ENCODE measurements at regions of chr1 and their contacts with region 1.

Region 1: DNA sequence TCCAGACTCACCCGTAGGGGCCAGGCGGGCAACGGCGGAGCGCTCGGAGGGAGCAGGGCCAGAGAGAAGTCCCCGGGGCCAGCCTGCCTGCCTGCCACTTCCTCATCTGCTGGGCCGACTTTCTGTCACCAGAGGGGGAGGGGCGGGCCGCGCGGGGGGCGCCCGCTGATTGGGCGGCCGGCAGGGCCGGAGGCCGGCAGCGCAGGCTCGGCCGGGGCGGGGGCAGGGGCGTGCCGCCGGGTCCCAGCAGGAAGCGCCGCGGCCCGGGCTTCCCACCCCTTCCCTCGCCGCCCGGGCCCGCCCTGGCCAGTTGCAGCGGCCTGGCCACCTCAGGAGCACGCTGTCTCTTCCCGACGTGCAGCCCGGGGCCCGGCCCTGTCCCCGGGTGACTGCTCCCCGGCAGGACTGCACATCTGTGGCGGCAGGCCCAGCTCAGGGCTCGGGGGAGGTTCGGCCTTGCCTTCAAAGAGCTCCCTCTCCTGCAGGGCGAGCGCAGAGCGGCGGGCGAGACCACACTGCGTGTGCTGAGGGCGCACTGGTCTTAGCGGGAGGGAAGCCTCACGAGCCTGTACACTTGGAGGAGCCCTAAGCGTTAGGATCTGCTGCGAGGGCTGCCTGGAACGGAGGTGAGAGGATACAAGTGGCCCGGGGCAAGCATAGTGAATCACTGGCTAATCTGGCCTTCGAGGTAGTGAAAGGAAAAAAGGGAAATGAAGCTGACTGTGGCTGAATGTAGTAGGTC is at the start of gene ELOVL1:
- DNase-seq: peak; percentile 92
- ATAC-seq: peak; percentile 87
- H3K4me3 Mint-ChIP-seq: peak within 1 kb of the TSS; percentile 93
- H3K27ac Mint-ChIP-seq: peak within 1 kb of the TSS; percentile 97
- H3K4me1 Mint-ChIP-seq: peaks cover 42% of the 10 kb centered on the region
- H3K27me3 Mint-ChIP-seq: no peaks in the 10 kb centered on the region
- CTCF ChIP-seq: no peak
- total RNA-seq, gene ELOVL1: 80.2 and 84.2 TPM in 2 replicates

Region 2: DNA sequence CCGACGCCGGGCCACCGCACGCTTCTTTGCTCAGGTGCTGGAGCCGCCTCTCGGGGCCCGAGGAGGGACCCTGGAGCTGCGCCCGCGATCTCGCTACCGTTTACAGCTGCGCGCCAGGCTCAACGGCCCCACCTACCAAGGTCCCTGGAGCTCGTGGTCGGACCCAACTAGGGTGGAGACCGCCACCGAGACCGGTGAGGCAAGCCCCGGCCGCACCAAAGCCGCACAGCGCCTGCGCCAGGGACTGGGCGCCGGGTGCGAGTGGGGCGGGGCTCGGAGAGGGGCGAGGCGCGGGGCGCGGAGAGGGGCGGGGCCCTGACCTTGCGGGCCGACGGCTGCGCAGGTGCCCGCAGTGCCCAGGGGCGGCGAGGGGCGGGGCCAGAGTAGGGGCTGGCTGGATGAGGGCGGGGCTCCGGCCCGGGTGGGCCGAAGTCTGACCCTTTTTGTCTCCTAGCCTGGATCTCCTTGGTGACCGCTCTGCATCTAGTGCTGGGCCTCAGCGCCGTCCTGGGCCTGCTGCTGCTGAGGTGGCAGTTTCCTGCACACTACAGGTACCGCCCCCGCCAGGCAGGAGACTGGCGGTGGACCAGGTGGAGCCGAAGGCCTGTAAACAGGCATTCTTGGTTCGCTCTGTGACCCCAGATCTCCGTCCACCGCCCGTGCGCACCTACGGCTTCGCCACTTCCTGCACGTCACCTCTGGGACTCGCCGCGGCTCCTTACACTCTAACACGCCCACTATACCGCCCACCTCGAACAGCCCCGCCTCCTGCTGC is 19.1 kb before region 1 on chr1:
- CTCF ChIA-PET with region 1: no interaction called
- POLR2A ChIA-PET with region 1: interaction called, 19 read pairs
- intact Hi-C with region 1: loop called (anchors 1 kb)
- DNase-seq: peak; percentile 65
- ATAC-seq: peak; percentile 86
- H3K4me3 Mint-ChIP-seq: peak overlapping the region; percentile 85
- H3K27ac Mint-ChIP-seq: peak overlapping the region; percentile 88
- H3K4me1 Mint-ChIP-seq: peaks cover 11% of the 10 kb centered on the region
- H3K27me3 Mint-ChIP-seq: no peaks in the 10 kb centered on the region
- CTCF ChIP-seq: no peak

Region 3: DNA sequence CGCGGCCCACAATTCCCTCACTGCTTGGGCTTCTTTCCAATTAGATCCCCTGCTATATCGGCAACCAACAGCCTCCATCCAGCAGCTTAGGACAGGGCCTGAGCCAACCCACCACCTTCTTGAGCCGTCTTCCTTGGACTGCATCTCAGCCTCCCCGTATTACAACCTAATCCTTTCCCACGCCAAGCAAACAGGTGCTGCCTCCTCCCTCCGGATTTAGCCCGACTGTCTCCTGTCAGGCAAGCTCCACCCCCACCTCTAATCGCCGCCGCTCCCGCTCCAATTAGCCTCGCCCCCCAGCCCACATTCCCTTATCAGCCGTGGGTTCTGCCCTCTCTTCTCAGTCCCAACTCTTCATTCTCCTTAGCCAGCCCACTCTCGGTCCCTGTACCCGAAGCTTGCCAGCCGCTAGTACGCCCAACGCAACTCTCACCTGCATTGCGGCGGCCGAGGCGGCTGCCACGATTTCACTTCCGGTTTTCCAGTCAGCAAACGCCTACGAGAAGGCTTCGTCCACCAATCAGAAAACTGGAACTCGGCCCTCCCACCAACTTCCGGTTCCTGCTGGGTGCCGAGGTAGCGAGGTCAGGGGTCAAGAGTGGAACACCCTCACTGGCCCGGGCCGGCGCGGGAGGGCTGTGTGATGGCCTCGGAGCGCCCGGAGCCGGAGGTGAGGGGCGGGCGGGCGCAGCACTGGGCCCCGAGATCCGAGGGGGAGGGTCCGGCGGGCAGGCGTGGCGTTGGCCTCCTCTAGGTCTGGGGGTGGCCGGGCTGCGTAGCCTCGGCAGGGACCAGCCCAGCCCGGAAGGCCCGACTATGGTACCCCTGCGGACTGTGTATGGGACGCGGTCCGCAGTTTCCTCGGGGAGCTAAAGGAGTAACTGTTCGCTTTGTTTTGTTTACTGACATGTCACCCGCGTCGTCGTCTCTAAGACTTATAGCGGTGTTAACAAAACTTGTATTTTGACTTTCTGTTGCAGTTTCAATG is 21.5 kb after region 1 on chr1 and contains the starts of genes MED8 and SZT2:
- CTCF ChIA-PET with region 1: interaction called, 3 read pairs
- POLR2A ChIA-PET with region 1: interaction called, 76 read pairs
- intact Hi-C with region 1: loop called (anchors 1 kb)
- DNase-seq: peak; percentile 90
- ATAC-seq: peak; percentile 91
- H3K4me3 Mint-ChIP-seq: peak within 1 kb of the TSS; percentile 99
- H3K27ac Mint-ChIP-seq: peak within 1 kb of the TSS; percentile 91
- H3K4me1 Mint-ChIP-seq: peaks cover 38% of the 10 kb centered on the region
- H3K27me3 Mint-ChIP-seq: no peaks in the 10 kb centered on the region
- CTCF ChIP-seq: no peak
- total RNA-seq, gene MED8: 33.8 and 37.2 TPM in 2 replicates
- total RNA-seq, gene SZT2: 108 and 139 TPM in 2 replicates

Region 4: DNA sequence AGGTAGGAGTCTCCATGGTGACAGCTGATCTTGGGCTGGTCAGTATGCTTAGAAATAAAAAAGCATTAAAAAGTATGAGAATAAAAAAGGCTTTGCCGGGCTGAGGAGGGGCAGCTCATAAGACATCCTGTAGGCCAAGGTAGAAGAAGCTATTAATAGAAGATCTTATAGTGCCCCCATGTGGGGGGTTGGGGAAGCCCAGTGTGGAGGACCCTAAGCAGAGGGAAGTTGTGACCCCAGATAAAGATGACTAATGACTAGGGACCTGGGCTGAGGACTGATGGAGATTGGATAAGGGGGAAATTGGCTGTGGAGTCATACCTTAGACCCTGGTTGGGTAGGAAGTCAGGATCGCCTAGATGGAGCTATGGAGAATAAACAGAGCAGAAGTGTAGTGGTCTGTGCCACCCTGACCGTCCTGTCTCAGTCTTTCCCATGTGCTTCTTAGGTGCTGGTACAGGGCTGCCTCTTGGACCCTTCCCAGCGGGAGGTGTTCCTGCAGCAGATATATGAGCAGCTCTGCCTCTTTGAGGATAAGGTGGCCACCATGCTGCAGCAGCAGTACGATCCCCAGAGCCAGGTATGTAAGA is 46.7 kb after region 1 on chr1:
- CTCF ChIA-PET with region 1: interaction called, 6 read pairs
- POLR2A ChIA-PET with region 1: interaction called, 14 read pairs
- intact Hi-C with region 1: no loop called
- DNase-seq: peak; percentile 31
- ATAC-seq: peak; percentile 96
- H3K4me3 Mint-ChIP-seq: no peak overlapping the region
- H3K27ac Mint-ChIP-seq: no peak overlapping the region
- H3K4me1 Mint-ChIP-seq: no peaks in the 10 kb centered on the region
- H3K27me3 Mint-ChIP-seq: no peaks in the 10 kb centered on the region
- CTCF ChIP-seq: peak; percentile 19

Region 5: GRCh38 chr1:43444836-43445235 is 76.8 kb after region 1 on chr1:
- CTCF ChIA-PET with region 1: no interaction called
- POLR2A ChIA-PET with region 1: no interaction called
- intact Hi-C with region 1: no loop called
- DNase-seq: no peak
- ATAC-seq: no peak
- H3K4me3 Mint-ChIP-seq: no peak overlapping the region
- H3K27ac Mint-ChIP-seq: no peak overlapping the region
- H3K4me1 Mint-ChIP-seq: no peaks in the 10 kb centered on the region
- H3K27me3 Mint-ChIP-seq: no peaks in the 10 kb centered on the region
- CTCF ChIP-seq: no peak

Region 6: DNA sequence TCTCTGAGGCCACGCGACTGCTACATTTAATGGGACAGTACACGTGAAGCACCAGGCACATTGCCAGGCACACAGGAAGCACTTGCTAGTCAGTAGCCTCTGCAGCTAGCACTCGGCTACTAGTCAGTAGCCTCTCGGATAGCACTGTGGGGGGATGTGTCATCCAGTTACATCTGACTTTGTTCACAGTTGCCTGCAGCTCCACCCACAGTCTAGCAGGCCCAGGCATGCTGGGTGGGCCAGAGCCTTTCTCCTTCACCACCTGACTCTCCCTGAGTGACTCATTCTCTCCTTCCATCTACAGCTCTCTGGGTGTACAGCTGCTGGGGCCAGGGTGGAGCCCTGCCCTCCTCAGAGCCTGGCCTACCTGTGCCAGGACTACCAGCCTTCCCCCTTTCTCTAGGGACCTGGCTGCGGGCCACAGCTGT is 214.1 kb after region 1 on chr1:
- CTCF ChIA-PET with region 1: no interaction called
- POLR2A ChIA-PET with region 1: no interaction called
- intact Hi-C with region 1: no loop called
- DNase-seq: no peak
- ATAC-seq: peak; percentile 25
- H3K4me3 Mint-ChIP-seq: no peak overlapping the region
- H3K27ac Mint-ChIP-seq: no peak overlapping the region
- H3K4me1 Mint-ChIP-seq: no peaks in the 10 kb centered on the region
- H3K27me3 Mint-ChIP-seq: peaks cover 2% of the 10 kb centered on the region
- CTCF ChIP-seq: no peak

Region 7: GRCh38 chr1:43650310-43651085 is 282.4 kb after region 1 on chr1:
- CTCF ChIA-PET with region 1: no interaction called
- POLR2A ChIA-PET with region 1: interaction called, 19 read pairs
- intact Hi-C with region 1: no loop called
- DNase-seq: peak; percentile 82
- ATAC-seq: peak; percentile 75
- H3K4me3 Mint-ChIP-seq: peak overlapping the region; percentile 98
- H3K27ac Mint-ChIP-seq: peak overlapping the region; percentile 97
- H3K4me1 Mint-ChIP-seq: peaks cover 46% of the 10 kb centered on the region
- H3K27me3 Mint-ChIP-seq: peaks cover 2% of the 10 kb centered on the region
- CTCF ChIP-seq: no peak

Region 8: DNA sequence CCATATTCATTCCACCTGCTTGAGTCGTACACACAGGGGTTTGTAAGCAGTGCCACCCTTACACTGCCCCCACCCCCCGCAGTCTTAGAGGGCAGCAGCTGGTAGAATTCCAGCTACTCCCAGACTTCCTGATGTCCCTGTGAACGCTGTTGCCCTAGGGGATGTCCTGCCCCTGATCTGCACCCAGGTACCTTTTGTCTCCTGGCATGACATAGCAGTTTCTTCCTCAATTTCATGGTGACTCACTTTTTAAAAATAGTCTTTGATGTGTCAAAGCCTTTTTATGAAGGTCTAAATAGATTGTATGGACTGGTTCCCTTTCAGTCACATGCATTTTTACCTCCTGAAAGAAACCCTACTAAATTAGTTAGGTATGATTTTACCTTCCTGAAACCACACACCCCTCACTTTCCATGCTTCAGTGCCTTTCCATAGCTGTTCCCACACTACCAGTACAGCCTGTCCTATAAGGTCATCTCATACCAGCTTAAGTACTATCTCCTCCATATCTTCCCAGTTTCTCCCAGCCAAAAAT is 415.7 kb after region 1 on chr1:
- CTCF ChIA-PET with region 1: no interaction called
- POLR2A ChIA-PET with region 1: no interaction called
- intact Hi-C with region 1: no loop called
- DNase-seq: no peak
- ATAC-seq: no peak
- H3K4me3 Mint-ChIP-seq: no peak overlapping the region
- H3K27ac Mint-ChIP-seq: no peak overlapping the region
- H3K4me1 Mint-ChIP-seq: no peaks in the 10 kb centered on the region
- H3K27me3 Mint-ChIP-seq: no peaks in the 10 kb centered on the region
- CTCF ChIP-seq: no peak